ENCODE measurements at regions of chr5 and their contacts with region 1.

Region 1: GRCh38 chr5:111757355-111758283 is 625 bp upstream of the NREP start:
- DNase-seq: peak; percentile 90
- ATAC-seq: peak; percentile 80
- H3K4me3 ChIP-seq: peak overlapping the region; percentile 68 to 83 (median 77)
- H3K4me3 Mint-ChIP-seq: peak overlapping the region; percentile 92
- H3K27ac ChIP-seq: peak overlapping the region; percentile 76 to 81
- H3K27ac Mint-ChIP-seq: peak overlapping the region; percentile 91
- H3K4me1 ChIP-seq: peaks cover 20 to 22% of the 10 kb centered on the region in 2 donors
- H3K4me1 Mint-ChIP-seq: peaks cover 21% of the 10 kb centered on the region
- H3K27me3 ChIP-seq: no peaks in the 10 kb centered on the region
- H3K27me3 Mint-ChIP-seq: peaks cover 7% of the 10 kb centered on the region
- CTCF ChIP-seq: no peak

Region 2: GRCh38 chr5:111092062-111092853 is 665.4 kb before region 1 on chr5 and contains the start of gene WDR36:
- CTCF ChIA-PET with region 1: no interaction called
- POLR2A ChIA-PET with region 1: no interaction called
- intact Hi-C with region 1: loop called (anchors 2 kb)
- DNase-seq: peak; percentile 93
- ATAC-seq: peak; percentile 94
- H3K4me3 ChIP-seq: peak within 1 kb of the TSS; percentile 87 to 94 (median 91)
- H3K4me3 Mint-ChIP-seq: peak within 1 kb of the TSS; percentile 97
- H3K27ac ChIP-seq: peak within 1 kb of the TSS; percentile 70 to 73
- H3K27ac Mint-ChIP-seq: peak within 1 kb of the TSS; percentile 74
- H3K4me1 ChIP-seq: peaks cover 13 to 24% of the 10 kb centered on the region in 2 donors
- H3K4me1 Mint-ChIP-seq: peaks cover 25% of the 10 kb centered on the region
- H3K27me3 ChIP-seq: peaks cover 0 to 7% (median 3%) of the 10 kb centered on the region in 4 experiments
- H3K27me3 Mint-ChIP-seq: peaks cover 6% of the 10 kb centered on the region
- CTCF ChIP-seq: no peak
- total RNA-seq, gene WDR36: 33.9 and 35.2 TPM in 2 replicates

Region 3: GRCh38 chr5:111530298-111530740 is 227.3 kb before region 1 on chr5:
- CTCF ChIA-PET with region 1: interaction called, 8 read pairs
- POLR2A ChIA-PET with region 1: no interaction called
- intact Hi-C with region 1: loop called (anchors 2 kb)
- DNase-seq: peak; percentile 89
- ATAC-seq: peak; percentile 100
- H3K4me3 ChIP-seq: peak overlapping the region in 1 of 5 experiments; percentile 8
- H3K4me3 Mint-ChIP-seq: peak overlapping the region; percentile 53
- H3K27ac ChIP-seq: peak overlapping the region; percentile 32 to 83
- H3K27ac Mint-ChIP-seq: peak overlapping the region; percentile 69
- H3K4me1 ChIP-seq: peaks cover 13 to 17% of the 10 kb centered on the region in 2 donors
- H3K4me1 Mint-ChIP-seq: peaks cover 20% of the 10 kb centered on the region
- H3K27me3 ChIP-seq: no peaks in the 10 kb centered on the region
- H3K27me3 Mint-ChIP-seq: peaks cover 3% of the 10 kb centered on the region
- CTCF ChIP-seq: no peak

Region 4: DNA sequence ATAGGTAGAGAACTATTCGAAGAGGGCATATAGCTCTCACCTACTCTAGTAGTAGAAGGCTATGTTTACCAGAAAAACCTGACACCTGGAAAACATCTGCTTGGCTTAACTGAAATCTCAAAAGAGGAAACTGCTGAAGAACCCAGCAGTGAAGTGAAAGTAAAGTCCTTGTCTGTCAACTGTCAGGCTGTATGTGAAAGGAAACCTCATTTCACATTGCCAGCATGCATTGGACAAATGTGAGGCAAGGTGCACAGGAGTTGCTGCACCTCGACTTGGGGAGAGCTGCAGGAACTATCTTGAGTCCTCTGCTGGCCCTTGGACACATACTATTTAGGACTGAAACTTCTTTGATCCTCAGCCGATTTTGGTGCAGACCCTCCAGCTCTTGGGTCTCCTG is 54.0 kb before region 1 on chr5:
- CTCF ChIA-PET with region 1: no interaction called
- POLR2A ChIA-PET with region 1: no interaction called
- intact Hi-C with region 1: loop called (anchors 5 kb)
- DNase-seq: peak; percentile 58
- ATAC-seq: peak; percentile 60
- H3K4me3 ChIP-seq: no peak overlapping the region
- H3K4me3 Mint-ChIP-seq: peak overlapping the region; percentile 14
- H3K27ac ChIP-seq: peak overlapping the region in 1 of 2 donors; percentile 35
- H3K27ac Mint-ChIP-seq: peak overlapping the region; percentile 3
- H3K4me1 ChIP-seq: peaks cover 17 to 19% of the 10 kb centered on the region in 2 donors
- H3K4me1 Mint-ChIP-seq: peaks cover 15% of the 10 kb centered on the region
- H3K27me3 ChIP-seq: no peaks in the 10 kb centered on the region
- H3K27me3 Mint-ChIP-seq: no peaks in the 10 kb centered on the region
- CTCF ChIP-seq: no peak

Measured in B cell (primary cell).